Astrocyte of the cerebellum (primary cell): ENCODE measurements at regions of chr6 and their contacts with region 1.

Region 1: GRCh38 chr6:90204327-90205056 is 92.2 kb downstream of the BACH2 start:
- DNase-seq: no peak
- H3K4me3 ChIP-seq: no peak overlapping the region
- CTCF ChIP-seq: no peak

Region 2: GRCh38 chr6:90241229-90241880 is 36.9 kb after region 1 on chr6:
- in situ Hi-C with region 1: no loop called
- DNase-seq: no peak
- H3K4me3 ChIP-seq: no peak overlapping the region
- CTCF ChIP-seq: no peak

Region 3: DNA sequence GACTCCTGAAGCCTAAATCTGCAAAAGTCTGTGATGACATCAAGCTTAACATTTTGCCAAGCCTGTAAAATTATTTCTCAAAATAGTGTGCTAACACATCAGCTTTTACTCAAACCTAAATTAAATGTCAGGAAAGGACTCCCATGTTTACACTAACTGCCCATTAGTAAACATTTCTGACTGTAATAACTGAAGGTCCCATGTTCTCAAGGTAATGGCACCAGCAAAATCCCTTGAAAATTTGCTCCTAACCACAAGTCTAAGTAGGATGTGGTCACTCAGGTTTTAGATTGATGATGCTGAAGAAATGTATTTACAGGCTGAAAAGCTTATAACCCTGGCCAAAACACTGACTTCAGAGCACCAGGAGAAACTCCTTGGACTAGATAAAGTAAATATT is 59.1 kb after region 1 on chr6:
- in situ Hi-C with region 1: loop called (anchors 5 kb)
- DNase-seq: peak; percentile 76
- H3K4me3 ChIP-seq: no peak overlapping the region
- CTCF ChIP-seq: no peak